ENCODE measurements at regions of chr7 and their contacts with region 1.

Region 1: GRCh38 chr7:29189743-29190201 is 4.8 kb upstream of the CHN2 start:
- DNase-seq: peak; percentile 36 to 40
- ATAC-seq: peak; percentile 84 to 92
- H3K4me3 ChIP-seq: no peak overlapping the region; the same call in 2 of the 3 replicates
- H3K27ac ChIP-seq: no peak overlapping the region
- H3K4me1 ChIP-seq: no peaks in the 10 kb centered on the region; the same call in 2 of the 3 replicates
- CTCF ChIP-seq: peak; percentile 66
- EP300 ChIP-seq: no peak
- POLR2A ChIP-seq: no peak
- RAD21 ChIP-seq: peak; percentile 58 to 70

Region 2: DNA sequence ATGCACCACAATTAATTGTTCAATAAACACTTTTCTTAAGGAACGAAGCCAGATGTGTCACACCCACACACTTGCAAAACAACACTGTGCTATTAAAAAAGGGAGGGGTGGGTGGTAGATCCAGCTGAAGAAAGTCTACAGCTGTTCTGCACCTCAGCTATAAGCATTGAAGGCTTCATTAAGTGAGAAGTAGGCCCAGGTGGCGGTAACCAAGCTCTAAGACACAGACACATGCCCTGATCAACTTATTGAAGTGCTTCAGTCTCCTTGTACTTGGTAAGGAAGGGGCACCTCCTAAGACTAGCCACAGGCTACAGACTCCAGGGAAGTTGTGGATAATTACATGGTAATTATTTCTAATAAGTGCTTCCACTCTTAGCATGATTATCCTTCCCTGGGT is 38.9 kb before region 1 on chr7:
- CTCF ChIA-PET with region 1: interaction called, 10 read pairs
- POLR2A ChIA-PET with region 1: no interaction called
- DNase-seq: no peak
- ATAC-seq: no peak
- H3K4me3 ChIP-seq: no peak overlapping the region
- H3K27ac ChIP-seq: no peak overlapping the region
- H3K4me1 ChIP-seq: no peaks in the 10 kb centered on the region
- CTCF ChIP-seq: no peak
- EP300 ChIP-seq: no peak
- POLR2A ChIP-seq: no peak
- RAD21 ChIP-seq: no peak

Region 3: DNA sequence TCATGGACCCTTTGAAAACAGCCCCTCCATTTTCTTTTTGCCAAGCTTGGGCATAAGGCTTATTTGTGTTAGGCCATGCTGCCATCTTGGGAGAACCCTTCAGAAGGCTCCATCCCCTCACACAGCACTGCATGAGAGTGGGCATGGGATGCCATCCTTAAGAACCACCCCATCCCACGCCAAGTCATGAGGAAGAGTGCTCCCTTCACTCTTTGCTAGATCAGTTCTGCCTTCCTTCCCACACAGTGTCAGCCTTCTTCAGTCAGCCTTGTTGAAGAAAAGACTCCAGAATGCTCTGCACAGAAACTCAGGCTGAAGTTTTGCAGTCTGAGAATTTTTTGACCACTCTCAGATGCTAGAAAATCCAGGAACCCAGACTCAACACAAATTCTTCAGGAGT is 10.7 kb before region 1 on chr7:
- CTCF ChIA-PET with region 1: interaction called, 11 read pairs
- POLR2A ChIA-PET with region 1: no interaction called
- DNase-seq: no peak
- ATAC-seq: no peak
- H3K4me3 ChIP-seq: no peak overlapping the region
- H3K27ac ChIP-seq: no peak overlapping the region
- H3K4me1 ChIP-seq: no peaks in the 10 kb centered on the region
- CTCF ChIP-seq: no peak
- EP300 ChIP-seq: no peak
- POLR2A ChIP-seq: no peak
- RAD21 ChIP-seq: no peak

Region 4: GRCh38 chr7:29207162-29207801 is 17.5 kb after region 1 on chr7:
- CTCF ChIA-PET with region 1: interaction called, 20 read pairs
- POLR2A ChIA-PET with region 1: no interaction called
- DNase-seq: no peak
- ATAC-seq: no peak; a peak in 1 of 6 replicates
- H3K4me3 ChIP-seq: no peak overlapping the region
- H3K27ac ChIP-seq: no peak overlapping the region
- H3K4me1 ChIP-seq: no peaks in the 10 kb centered on the region
- CTCF ChIP-seq: no peak
- EP300 ChIP-seq: no peak
- POLR2A ChIP-seq: no peak
- RAD21 ChIP-seq: no peak

Region 5: DNA sequence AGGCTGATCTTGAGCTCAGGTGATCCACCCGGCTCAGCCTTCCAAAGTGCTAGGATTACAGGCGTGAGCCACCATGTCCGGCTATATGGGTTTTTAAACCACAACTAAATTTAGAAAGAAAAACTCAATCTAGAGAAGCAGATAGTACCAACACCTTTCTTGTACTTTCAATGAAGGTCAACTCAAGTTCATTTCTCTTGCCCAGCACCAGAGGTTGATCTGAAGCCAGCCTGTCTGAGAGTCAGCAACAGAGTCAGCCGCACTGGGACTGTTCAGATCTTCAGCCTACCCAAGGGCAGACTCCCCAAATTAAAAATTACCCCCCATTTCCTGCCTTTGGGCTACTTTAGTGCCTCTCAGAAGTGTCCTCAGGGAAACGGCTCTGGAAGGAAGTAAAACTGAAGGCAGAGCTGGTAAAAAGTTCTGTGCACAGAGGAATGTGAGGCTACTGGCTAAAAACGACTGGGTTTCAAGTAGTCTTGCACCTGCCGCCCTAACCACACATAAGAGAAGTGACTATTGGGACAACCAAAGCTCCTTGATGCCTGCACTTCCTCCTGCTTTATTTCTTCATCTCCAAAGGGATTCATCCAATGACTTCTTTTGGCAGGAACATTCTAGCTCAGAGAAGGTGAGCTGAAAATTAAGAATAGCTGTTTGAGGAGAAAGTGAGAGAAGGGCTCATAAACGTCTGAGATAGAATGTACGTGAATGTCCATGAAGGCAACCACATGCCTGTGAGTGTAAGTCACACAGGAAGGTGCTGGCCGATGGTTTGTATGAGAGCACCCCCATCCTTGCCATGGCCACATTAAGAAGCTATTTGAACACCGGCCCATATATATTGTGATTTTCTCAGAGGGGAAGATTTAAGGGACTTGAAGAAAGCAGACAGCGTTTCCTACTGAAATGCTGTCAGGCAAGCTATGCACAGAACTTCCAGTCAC is 231.5 kb after region 1 on chr7:
- CTCF ChIA-PET with region 1: interaction called, 10 read pairs
- POLR2A ChIA-PET with region 1: no interaction called
- DNase-seq: no peak
- ATAC-seq: no peak
- H3K4me3 ChIP-seq: no peak overlapping the region
- H3K27ac ChIP-seq: no peak overlapping the region
- H3K4me1 ChIP-seq: no peaks in the 10 kb centered on the region
- CTCF ChIP-seq: no peak
- EP300 ChIP-seq: no peak
- POLR2A ChIP-seq: no peak
- RAD21 ChIP-seq: no peak

Region 6: GRCh38 chr7:29471444-29472138 is 281.8 kb after region 1 on chr7:
- CTCF ChIA-PET with region 1: no interaction called
- POLR2A ChIA-PET with region 1: no interaction called
- DNase-seq: peak in 1 of 2 experiments; percentile 18
- ATAC-seq: peak in 1 of 2 experiments; percentile 39; a peak in 1 of 6 replicates
- H3K4me3 ChIP-seq: no peak overlapping the region
- H3K27ac ChIP-seq: peak overlapping the region in 1 of 2 experiments; percentile 38; a peak in 1 of 6 replicates
- H3K4me1 ChIP-seq: peaks cover 14% of the 10 kb centered on the region
- CTCF ChIP-seq: no peak
- EP300 ChIP-seq: no peak
- POLR2A ChIP-seq: no peak
- RAD21 ChIP-seq: no peak